CD8-positive, alpha-beta T cell (primary cell): ENCODE measurements at regions of chr13 and their contacts with region 1.

Region 1: GRCh38 chr13:97109841-97110492 is 112.2 kb upstream of the MBNL2 start:
- DNase-seq: peak; percentile 63 to 90 (median 79)
- ATAC-seq: peak; percentile 90
- H3K4me3 ChIP-seq: no peak overlapping the region
- H3K4me3 Mint-ChIP-seq: peak overlapping the region; percentile 51
- H3K27ac ChIP-seq: no peak overlapping the region
- H3K27ac Mint-ChIP-seq: no peak overlapping the region
- H3K4me1 ChIP-seq: peaks cover 6% of the 10 kb centered on the region
- H3K4me1 Mint-ChIP-seq: peaks cover 11% of the 10 kb centered on the region
- H3K27me3 ChIP-seq: no peaks in the 10 kb centered on the region
- H3K27me3 Mint-ChIP-seq: peaks cover 3% of the 10 kb centered on the region
- CTCF ChIP-seq: peak; percentile 92

Region 2: GRCh38 chr13:95524266-95524901 is 1585.6 kb before region 1 on chr13:
- CTCF ChIA-PET with region 1: no interaction called
- POLR2A ChIA-PET with region 1: no interaction called
- intact Hi-C with region 1: no loop called
- DNase-seq: no peak
- ATAC-seq: no peak
- H3K4me3 ChIP-seq: no peak overlapping the region
- H3K4me3 Mint-ChIP-seq: no peak overlapping the region
- H3K27ac ChIP-seq: no peak overlapping the region
- H3K27ac Mint-ChIP-seq: no peak overlapping the region
- H3K4me1 ChIP-seq: no peaks in the 10 kb centered on the region
- H3K4me1 Mint-ChIP-seq: no peaks in the 10 kb centered on the region
- H3K27me3 ChIP-seq: peaks cover 0 to 6% of the 10 kb centered on the region in 2 experiments
- H3K27me3 Mint-ChIP-seq: peaks cover 18% of the 10 kb centered on the region
- CTCF ChIP-seq: no peak

Region 3: GRCh38 chr13:95793018-95793555 is 1316.9 kb before region 1 on chr13:
- CTCF ChIA-PET with region 1: no interaction called
- POLR2A ChIA-PET with region 1: no interaction called
- intact Hi-C with region 1: no loop called
- DNase-seq: no peak
- ATAC-seq: no peak
- H3K4me3 ChIP-seq: no peak overlapping the region
- H3K4me3 Mint-ChIP-seq: no peak overlapping the region
- H3K27ac ChIP-seq: no peak overlapping the region
- H3K27ac Mint-ChIP-seq: no peak overlapping the region
- H3K4me1 ChIP-seq: no peaks in the 10 kb centered on the region
- H3K4me1 Mint-ChIP-seq: no peaks in the 10 kb centered on the region
- H3K27me3 ChIP-seq: no peaks in the 10 kb centered on the region
- H3K27me3 Mint-ChIP-seq: no peaks in the 10 kb centered on the region
- CTCF ChIP-seq: no peak

Region 4: GRCh38 chr13:96796091-96796633 is 313.8 kb before region 1 on chr13:
- CTCF ChIA-PET with region 1: no interaction called
- POLR2A ChIA-PET with region 1: no interaction called
- intact Hi-C with region 1: no loop called
- DNase-seq: no peak
- ATAC-seq: no peak
- H3K4me3 ChIP-seq: no peak overlapping the region
- H3K4me3 Mint-ChIP-seq: no peak overlapping the region
- H3K27ac ChIP-seq: no peak overlapping the region
- H3K27ac Mint-ChIP-seq: no peak overlapping the region
- H3K4me1 ChIP-seq: no peaks in the 10 kb centered on the region
- H3K4me1 Mint-ChIP-seq: no peaks in the 10 kb centered on the region
- H3K27me3 ChIP-seq: no peaks in the 10 kb centered on the region
- H3K27me3 Mint-ChIP-seq: no peaks in the 10 kb centered on the region
- CTCF ChIP-seq: no peak

Region 5: GRCh38 chr13:97120346-97120745 is 10.4 kb after region 1 on chr13:
- CTCF ChIA-PET with region 1: interaction called, 12 read pairs
- POLR2A ChIA-PET with region 1: no interaction called
- intact Hi-C with region 1: no loop called
- DNase-seq: no peak
- ATAC-seq: no peak
- H3K4me3 ChIP-seq: no peak overlapping the region
- H3K4me3 Mint-ChIP-seq: no peak overlapping the region
- H3K27ac ChIP-seq: no peak overlapping the region
- H3K27ac Mint-ChIP-seq: no peak overlapping the region
- H3K4me1 ChIP-seq: no peaks in the 10 kb centered on the region
- H3K4me1 Mint-ChIP-seq: no peaks in the 10 kb centered on the region
- H3K27me3 ChIP-seq: no peaks in the 10 kb centered on the region
- H3K27me3 Mint-ChIP-seq: peaks cover 33% of the 10 kb centered on the region
- CTCF ChIP-seq: no peak

Region 6: DNA sequence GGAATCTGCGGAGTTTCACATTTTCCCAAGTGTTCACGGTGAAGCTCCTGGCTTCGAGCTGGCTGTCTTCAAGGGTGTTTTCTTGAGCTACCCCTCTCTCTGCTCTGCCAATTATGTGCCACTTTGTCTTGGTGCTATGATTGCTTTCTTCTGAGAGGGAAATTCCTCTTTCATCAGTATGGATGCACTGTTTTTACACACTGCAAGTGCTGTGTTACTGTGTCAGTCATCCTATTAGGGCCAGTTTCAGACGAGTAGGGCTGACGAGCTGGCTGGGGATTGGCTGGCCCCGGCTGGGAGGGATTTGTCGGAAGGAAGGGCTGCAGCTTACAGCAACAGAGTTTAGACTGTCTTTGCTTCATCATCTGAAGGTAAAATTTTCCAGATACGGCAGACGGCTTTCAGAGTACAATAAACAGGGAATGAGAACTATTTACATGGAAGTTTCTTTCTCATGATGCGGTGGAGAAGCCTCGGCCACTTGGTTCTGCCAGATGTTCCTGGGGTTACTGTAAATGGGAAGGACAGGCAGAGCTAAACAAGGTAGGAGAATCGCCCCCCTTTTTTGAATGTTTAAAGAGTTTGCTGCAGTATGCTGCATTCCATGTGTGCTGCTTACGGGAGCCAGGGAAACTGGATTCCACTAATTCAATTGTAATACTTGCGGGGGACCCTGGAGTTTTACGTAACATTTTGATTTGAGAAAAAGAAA is 112.2 kb after region 1 on chr13 and contains the start of gene MBNL2:
- CTCF ChIA-PET with region 1: interaction called, 12 read pairs
- POLR2A ChIA-PET with region 1: no interaction called
- intact Hi-C with region 1: loop called in 1 of 2 experiments (anchors 5 kb)
- DNase-seq: peak; percentile 72 to 93 (median 85)
- ATAC-seq: peak; percentile 97
- H3K4me3 ChIP-seq: peak within 1 kb of the TSS; percentile 57 to 76
- H3K4me3 Mint-ChIP-seq: peak within 1 kb of the TSS; percentile 88
- H3K27ac ChIP-seq: peak within 1 kb of the TSS; percentile 81 to 86
- H3K27ac Mint-ChIP-seq: peak within 1 kb of the TSS; percentile 93
- H3K4me1 ChIP-seq: peaks cover 39% of the 10 kb centered on the region
- H3K4me1 Mint-ChIP-seq: peaks cover 42% of the 10 kb centered on the region
- H3K27me3 ChIP-seq: no peaks in the 10 kb centered on the region
- H3K27me3 Mint-ChIP-seq: no peaks in the 10 kb centered on the region
- CTCF ChIP-seq: no peak
- total RNA-seq, gene MBNL2: 31.2 to 33.2 TPM

Region 7: GRCh38 chr13:97344265-97345175 is 234.6 kb after region 1 on chr13:
- CTCF ChIA-PET with region 1: interaction called, 339 read pairs
- POLR2A ChIA-PET with region 1: interaction called, 3 read pairs
- intact Hi-C with region 1: loop called (anchors 1 kb)
- DNase-seq: peak in 6 of 9 experiments; percentile 24 to 62 (median 48)
- ATAC-seq: no peak
- H3K4me3 ChIP-seq: no peak overlapping the region
- H3K4me3 Mint-ChIP-seq: no peak overlapping the region
- H3K27ac ChIP-seq: no peak overlapping the region
- H3K27ac Mint-ChIP-seq: no peak overlapping the region
- H3K4me1 ChIP-seq: no peaks in the 10 kb centered on the region
- H3K4me1 Mint-ChIP-seq: no peaks in the 10 kb centered on the region
- H3K27me3 ChIP-seq: no peaks in the 10 kb centered on the region
- H3K27me3 Mint-ChIP-seq: no peaks in the 10 kb centered on the region
- CTCF ChIP-seq: peak; percentile 62

Region 8: GRCh38 chr13:97376981-97377380 is 267.0 kb after region 1 on chr13:
- CTCF ChIA-PET with region 1: interaction called, 40 read pairs
- POLR2A ChIA-PET with region 1: no interaction called
- intact Hi-C with region 1: no loop called
- DNase-seq: no peak
- ATAC-seq: no peak
- H3K4me3 ChIP-seq: no peak overlapping the region
- H3K4me3 Mint-ChIP-seq: no peak overlapping the region
- H3K27ac ChIP-seq: no peak overlapping the region
- H3K27ac Mint-ChIP-seq: no peak overlapping the region
- H3K4me1 ChIP-seq: no peaks in the 10 kb centered on the region
- H3K4me1 Mint-ChIP-seq: no peaks in the 10 kb centered on the region
- H3K27me3 ChIP-seq: no peaks in the 10 kb centered on the region
- H3K27me3 Mint-ChIP-seq: no peaks in the 10 kb centered on the region
- CTCF ChIP-seq: no peak

Region 9: DNA sequence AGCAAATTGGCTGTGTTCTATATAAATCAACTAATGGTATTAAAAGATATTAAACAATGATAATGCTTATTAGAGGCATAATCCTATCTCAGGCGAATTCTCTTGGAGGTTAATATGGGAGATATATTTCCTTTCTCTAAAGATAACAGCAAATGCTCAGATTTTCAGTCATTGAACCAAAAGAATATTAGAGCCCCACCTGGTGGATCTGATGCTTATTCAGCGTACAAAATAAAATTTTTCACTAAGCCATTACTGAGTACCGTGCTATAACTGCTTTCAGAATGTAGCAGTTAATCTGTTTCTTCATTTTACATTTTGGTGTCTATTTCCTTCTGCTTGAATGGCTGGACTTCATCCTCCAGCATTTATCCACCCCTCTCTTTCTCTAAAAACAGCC is 700.2 kb after region 1 on chr13:
- CTCF ChIA-PET with region 1: no interaction called
- POLR2A ChIA-PET with region 1: no interaction called
- intact Hi-C with region 1: loop called (anchors 5 to 10 kb)
- DNase-seq: no peak
- ATAC-seq: no peak
- H3K4me3 ChIP-seq: no peak overlapping the region
- H3K4me3 Mint-ChIP-seq: no peak overlapping the region
- H3K27ac ChIP-seq: no peak overlapping the region
- H3K27ac Mint-ChIP-seq: no peak overlapping the region
- H3K4me1 ChIP-seq: no peaks in the 10 kb centered on the region
- H3K4me1 Mint-ChIP-seq: no peaks in the 10 kb centered on the region
- H3K27me3 ChIP-seq: no peaks in the 10 kb centered on the region
- H3K27me3 Mint-ChIP-seq: peaks cover 32% of the 10 kb centered on the region
- CTCF ChIP-seq: no peak